ENCODE measurements at regions of chr15 and their contacts with region 1.

Region 1: GRCh38 chr15:38895326-38896255 is 331.0 kb upstream of the RASGRP1 start:
- DNase-seq: no peak

Region 2: DNA sequence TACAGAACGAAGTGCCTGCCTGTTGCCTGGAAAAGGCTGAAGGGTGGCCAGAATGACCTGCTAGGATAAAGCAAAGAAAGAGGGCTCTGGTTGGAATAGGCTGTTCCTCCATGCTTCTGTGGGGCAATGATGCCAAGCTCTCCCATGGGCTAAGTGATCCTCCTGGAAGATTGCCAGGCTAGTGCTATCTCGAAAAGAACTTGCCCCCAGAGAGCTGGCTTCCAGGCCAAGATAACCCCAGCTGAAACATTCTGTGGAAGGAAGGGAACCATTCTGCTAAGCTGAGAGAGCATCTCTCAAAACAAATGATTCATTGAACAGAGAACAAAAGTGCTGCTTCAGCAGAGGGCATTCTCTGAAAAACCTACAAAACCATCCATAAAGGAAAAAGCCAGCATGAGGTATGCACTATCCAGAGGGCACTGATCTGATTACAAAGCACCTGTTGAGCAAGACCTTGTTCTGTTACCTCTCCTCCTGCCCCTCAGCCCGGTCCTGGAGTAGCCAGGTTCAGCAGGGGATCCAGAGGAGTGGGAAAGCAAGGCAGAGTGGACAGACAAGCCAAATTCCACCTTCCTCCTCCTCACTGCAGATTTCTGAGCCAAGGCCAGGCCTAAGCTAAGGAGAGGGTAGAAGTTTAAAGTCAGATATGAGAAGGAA is 674.9 kb before region 1 on chr15:
- intact Hi-C with region 1: loop called in 1 of 2 experiments (anchors 5 kb)
- DNase-seq: no peak

Region 3: DNA sequence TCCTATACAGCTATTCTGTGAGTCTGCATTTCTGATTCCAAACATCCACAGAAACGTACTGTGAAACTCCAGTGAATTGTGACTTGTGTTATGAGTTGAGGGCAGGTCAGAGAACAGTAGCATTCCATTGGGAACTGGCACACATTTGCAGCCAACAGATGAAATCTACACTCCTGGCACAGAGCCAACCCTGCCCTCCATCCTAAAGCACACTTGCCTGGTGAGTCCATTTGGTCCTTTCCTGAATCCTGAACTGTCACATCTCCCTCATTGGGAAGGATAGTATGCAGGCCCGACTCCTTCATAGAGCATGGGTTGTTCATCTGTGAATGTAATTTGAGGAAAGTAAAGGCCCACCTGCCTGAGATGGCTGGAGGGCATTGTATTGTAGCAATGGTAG is 16.7 kb before region 1 on chr15:
- intact Hi-C with region 1: no loop called
- DNase-seq: no peak

Measured in posterior vena cava (tissue), 2 donors.